ENCODE measurements at regions of chr13 and their contacts with region 1.

Region 1: DNA sequence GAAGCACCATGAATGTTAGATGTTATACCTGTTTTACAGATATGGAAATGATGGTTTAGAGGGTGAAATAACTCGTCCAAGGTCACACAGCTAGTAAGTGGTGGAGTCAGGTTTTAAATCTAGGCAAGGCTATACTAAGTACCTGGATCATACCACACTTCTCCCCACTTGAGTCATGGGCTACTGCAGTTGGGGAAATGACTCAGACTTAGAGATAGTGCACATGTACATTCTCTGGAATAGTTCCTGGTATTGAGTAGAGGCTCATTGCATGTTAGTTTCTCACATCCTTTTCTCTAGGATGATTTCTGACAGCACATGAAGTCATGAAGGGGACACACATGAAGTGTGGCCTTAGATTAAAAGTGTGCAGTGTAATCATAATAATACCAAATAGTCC is 76.2 kb upstream of the TNFSF11 start:
- DNase-seq: peak; percentile 12
- H3K4me3 Mint-ChIP-seq: no peak overlapping the region
- H3K27ac Mint-ChIP-seq: peak overlapping the region; percentile 86
- H3K4me1 Mint-ChIP-seq: peaks cover 54% of the 10 kb centered on the region
- H3K27me3 Mint-ChIP-seq: no peaks in the 10 kb centered on the region

Region 2: GRCh38 chr13:42354241-42355091 is 143.3 kb before region 1 on chr13:
- intact Hi-C with region 1: loop called (anchors 1 kb)
- DNase-seq: no peak
- H3K4me3 Mint-ChIP-seq: peak overlapping the region; percentile 72
- H3K27ac Mint-ChIP-seq: peak overlapping the region; percentile 99
- H3K4me1 Mint-ChIP-seq: peaks cover 68% of the 10 kb centered on the region
- H3K27me3 Mint-ChIP-seq: peaks cover 1% of the 10 kb centered on the region

Region 3: DNA sequence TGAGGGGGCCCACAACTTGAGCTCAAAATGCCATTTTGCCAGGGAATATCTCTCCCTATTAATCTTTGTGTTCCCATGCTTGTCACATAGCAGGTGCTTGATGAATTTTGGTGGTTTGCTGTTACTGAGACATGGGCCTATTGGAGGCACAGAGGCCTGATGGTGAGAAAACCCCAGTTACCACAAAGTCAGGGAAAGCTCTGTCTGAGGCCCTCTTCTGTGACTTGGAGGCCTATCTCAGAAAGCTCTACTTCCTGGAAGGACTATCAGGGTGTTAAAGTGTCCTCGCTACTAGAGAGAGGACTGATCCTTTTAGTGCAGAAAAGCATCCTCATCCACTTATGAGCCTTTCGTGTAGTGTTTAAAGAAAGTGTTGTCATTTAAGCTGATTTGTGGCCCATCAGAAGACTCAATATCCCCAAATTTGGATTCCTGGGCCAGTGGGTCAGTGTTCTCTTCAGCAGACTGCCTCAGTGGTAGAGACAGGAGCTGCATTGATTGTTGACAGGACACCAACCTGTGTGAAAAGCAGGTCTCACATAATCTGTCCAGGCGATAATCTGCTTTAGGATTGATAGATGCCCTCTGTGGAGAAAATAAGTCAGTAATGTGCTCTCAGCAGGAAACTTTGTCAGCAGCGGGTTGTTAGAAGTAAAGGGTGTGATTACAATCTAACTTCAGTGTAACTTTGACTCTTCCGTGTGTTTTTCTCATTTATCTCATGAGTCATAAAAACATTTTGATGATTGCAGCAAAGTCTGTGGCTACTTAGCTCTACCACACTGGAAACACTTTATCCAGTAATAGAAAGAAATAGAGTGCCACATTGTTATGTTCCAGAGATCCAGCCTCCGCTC is 104.9 kb before region 1 on chr13:
- intact Hi-C with region 1: loop called (anchors 1 kb)
- DNase-seq: peak; percentile 45
- H3K4me3 Mint-ChIP-seq: peak overlapping the region; percentile 89
- H3K27ac Mint-ChIP-seq: peak overlapping the region; percentile 100
- H3K4me1 Mint-ChIP-seq: peaks cover 79% of the 10 kb centered on the region
- H3K27me3 Mint-ChIP-seq: no peaks in the 10 kb centered on the region

Region 4: GRCh38 chr13:42420304-42420703 is 77.5 kb before region 1 on chr13:
- intact Hi-C with region 1: loop called (anchors 1 kb)
- DNase-seq: no peak
- H3K4me3 Mint-ChIP-seq: peak overlapping the region; percentile 54
- H3K27ac Mint-ChIP-seq: peak overlapping the region; percentile 83
- H3K4me1 Mint-ChIP-seq: peaks cover 43% of the 10 kb centered on the region
- H3K27me3 Mint-ChIP-seq: peaks cover 2% of the 10 kb centered on the region

Region 5: DNA sequence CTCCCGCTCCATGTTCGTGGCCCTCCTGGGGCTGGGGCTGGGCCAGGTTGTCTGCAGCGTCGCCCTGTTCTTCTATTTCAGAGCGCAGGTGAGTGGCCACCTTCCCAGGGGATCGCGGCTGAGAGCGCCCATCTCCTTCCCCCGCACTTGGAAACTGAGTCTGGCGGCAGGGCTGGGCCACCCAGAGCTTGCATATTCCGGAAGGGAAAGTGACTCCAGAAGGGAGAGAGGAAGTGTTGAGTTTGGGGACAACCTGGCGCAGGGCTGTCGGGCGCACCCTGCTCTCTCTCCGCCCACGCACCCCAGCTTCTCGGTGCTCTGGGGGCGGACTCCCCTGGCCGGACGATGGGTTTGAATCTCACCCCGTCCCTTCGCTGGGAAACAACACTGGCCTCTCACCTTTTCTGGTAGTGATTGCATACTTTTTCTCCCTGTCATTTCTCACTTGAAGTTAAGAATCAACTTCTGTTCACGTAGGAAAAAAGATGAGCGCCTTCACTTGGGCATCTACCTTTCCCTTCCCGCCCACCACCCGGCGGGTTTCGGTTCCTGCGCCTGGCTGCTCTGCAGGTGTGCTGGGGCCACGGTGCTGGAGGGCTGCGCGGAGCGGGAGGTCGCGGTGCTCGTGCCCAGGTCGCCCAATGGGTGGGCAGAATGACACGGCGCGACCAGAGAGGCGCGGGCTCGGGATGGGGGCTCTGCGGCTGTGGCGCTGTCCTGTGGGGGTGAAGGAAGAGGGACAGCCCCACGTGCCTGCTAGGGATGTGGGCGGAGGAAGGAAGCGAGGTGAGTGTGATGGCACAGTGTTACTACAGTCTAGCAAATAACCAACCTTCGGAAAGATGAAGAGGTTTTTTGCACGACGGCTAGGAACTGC is 76.9 kb after region 1 on chr13:
- intact Hi-C with region 1: loop called (anchors 1 kb)
- DNase-seq: no peak
- H3K4me3 Mint-ChIP-seq: peak overlapping the region; percentile 74
- H3K27ac Mint-ChIP-seq: peak overlapping the region; percentile 64
- H3K4me1 Mint-ChIP-seq: peaks cover 19% of the 10 kb centered on the region
- H3K27me3 Mint-ChIP-seq: peaks cover 59% of the 10 kb centered on the region

Region 6: DNA sequence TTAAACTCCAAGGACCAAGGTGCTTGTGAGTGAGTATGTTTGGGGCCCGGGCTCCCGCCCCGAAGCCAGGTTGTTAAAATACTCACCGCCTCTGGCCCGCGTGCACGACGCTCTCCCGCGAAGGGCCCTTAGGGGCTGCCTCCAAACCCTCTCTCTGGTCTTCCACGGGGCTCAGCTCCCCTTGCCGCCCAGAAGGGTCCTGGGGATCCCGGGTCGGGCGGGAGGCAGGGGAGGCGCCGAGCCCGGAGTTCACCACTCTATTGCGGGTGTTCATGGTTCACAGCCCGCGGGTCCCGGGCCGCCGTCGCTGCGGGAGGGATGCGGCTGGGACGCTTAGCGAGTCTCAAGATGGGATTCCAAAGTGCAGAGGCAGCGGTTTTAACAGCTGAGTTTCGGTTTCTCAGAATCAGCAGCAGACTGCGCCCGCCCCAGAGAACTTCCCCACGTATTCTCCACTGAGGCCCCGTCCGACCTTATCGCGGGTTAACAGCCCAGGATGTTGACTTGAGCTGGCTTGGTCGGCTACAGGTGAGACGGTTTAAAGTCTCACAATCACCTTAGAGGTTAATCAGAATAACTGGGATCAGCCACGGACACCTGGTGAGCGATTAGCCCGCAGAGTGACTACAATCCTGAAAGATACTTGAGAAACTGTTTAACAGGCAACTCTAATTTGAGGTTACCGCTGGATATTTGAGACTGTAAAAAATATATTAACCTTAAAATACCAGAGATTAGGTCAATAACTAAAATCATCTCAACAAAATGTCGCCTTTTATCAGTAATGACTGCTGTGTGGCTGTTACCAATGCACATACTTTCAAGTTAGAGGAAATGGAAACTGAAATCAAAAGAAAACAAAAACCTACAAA is 494.3 kb after region 1 on chr13 and contains the start of gene EPSTI1:
- intact Hi-C with region 1: loop called (anchors 5 kb)
- DNase-seq: peak; percentile 80
- H3K4me3 Mint-ChIP-seq: peak within 1 kb of the TSS; percentile 95
- H3K27ac Mint-ChIP-seq: peak within 1 kb of the TSS; percentile 97
- H3K4me1 Mint-ChIP-seq: peaks cover 76% of the 10 kb centered on the region
- H3K27me3 Mint-ChIP-seq: no peaks in the 10 kb centered on the region
- total RNA-seq, gene EPSTI1: 18.6 and 19.3 TPM in 2 replicates

Region 7: DNA sequence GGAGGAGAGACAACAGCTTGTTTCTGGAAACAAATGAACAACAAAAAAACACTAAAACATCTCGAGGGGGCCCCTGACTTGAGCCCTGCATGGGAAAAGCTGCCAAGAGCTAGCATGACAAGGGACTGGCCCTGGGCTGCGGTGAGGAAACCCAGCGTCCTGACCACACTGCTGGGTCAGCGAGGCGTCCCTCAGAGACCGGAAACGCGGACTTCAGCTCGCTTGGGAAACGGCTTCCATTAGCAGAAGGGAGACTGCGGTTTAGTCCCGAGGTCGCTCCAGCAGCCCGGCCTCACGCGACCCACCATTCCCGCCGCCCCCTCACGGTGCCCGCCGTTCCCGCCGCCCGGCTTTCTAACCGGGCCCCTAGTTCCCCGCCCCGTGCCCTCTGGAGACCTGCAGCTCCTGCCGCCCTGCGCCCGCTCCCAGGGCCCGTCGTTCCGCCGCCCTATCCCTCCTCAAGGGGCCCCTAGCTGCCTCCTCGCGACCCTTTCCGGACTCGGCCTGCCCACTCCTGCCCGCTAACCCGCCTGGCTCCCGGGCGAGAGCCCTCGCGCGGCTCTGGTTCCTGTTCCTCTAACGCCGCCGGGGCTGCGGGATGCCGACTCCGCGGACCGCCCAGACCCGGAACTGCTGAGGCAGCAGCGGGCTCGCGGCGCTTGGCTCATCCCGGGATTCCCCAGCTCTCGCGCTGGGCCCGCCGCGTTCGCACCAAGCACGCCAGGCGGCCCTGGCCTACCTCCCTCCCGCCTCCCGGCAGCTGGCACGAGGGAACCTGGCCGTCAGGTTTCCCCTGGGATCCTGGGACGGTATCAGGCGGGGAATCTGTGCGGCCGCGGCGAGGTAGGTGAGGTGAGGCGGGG is 1381.3 kb after region 1 on chr13 and contains the start of gene CCDC122:
- intact Hi-C with region 1: loop called (anchors 10 kb)
- DNase-seq: peak; percentile 75
- H3K4me3 Mint-ChIP-seq: peak within 1 kb of the TSS; percentile 84
- H3K27ac Mint-ChIP-seq: peak within 1 kb of the TSS; percentile 81
- H3K4me1 Mint-ChIP-seq: peaks cover 28% of the 10 kb centered on the region
- H3K27me3 Mint-ChIP-seq: peaks cover 15% of the 10 kb centered on the region
- total RNA-seq, gene CCDC122: 0.86 and 1.5 TPM in 2 replicates